ENCODE measurements at regions of chr12 and their contacts with region 1.

Region 1: GRCh38 chr12:132687208-132688164 is at the starts of genes POLE and PXMP2:
- DNase-seq: peak; percentile 98
- H3K4me3 ChIP-seq: peak within 1 kb of the TSS; percentile 76 to 95 (median 92)
- H3K27ac ChIP-seq: peak within 1 kb of the TSS; percentile 67 to 75 (median 70)
- H3K4me1 ChIP-seq: peaks cover 0 to 26% (median 15%) of the 10 kb centered on the region in 4 donors
- H3K27me3 ChIP-seq: no peaks in the 10 kb centered on the region
- CTCF ChIP-seq: no peak
- EP300 ChIP-seq: no peak
- POLR2A ChIP-seq: no peak
- total RNA-seq, gene POLE: 12.5 to 37.4 (median 34.0) TPM
- total RNA-seq, gene PXMP2: 19.4 to 46.4 (median 42.8) TPM

Region 2: GRCh38 chr12:132710422-132711168 is 23.1 kb after region 1 on chr12 and contains the start of gene PGAM5:
- intact Hi-C with region 1: loop called (anchors 1 kb)
- DNase-seq: peak; percentile 85
- H3K4me3 ChIP-seq: peak within 1 kb of the TSS; percentile 70 to 97 (median 94)
- H3K27ac ChIP-seq: peak within 1 kb of the TSS; percentile 73 to 86 (median 83)
- H3K4me1 ChIP-seq: peaks cover 0 to 24% (median 20%) of the 10 kb centered on the region in 4 donors
- H3K27me3 ChIP-seq: no peaks in the 10 kb centered on the region
- CTCF ChIP-seq: no peak
- EP300 ChIP-seq: no peak
- POLR2A ChIP-seq: peak in 1 of 2 donors; percentile 22
- total RNA-seq, gene PGAM5: 19.7 to 24.6 (median 23.7) TPM